ENCODE measurements at regions of chr6 and their contacts with region 1.

Region 1: GRCh38 chr6:119110601-119111548 is 32.4 kb upstream of the FAM184A start:
- DNase-seq: peak in 7 of 9 experiments; percentile 13 to 77 (median 48)
- ATAC-seq: peak; percentile 83
- H3K4me3 ChIP-seq: no peak overlapping the region
- H3K4me3 Mint-ChIP-seq: no peak overlapping the region
- H3K27ac ChIP-seq: no peak overlapping the region
- H3K27ac Mint-ChIP-seq: no peak overlapping the region
- H3K4me1 ChIP-seq: no peaks in the 10 kb centered on the region
- H3K4me1 Mint-ChIP-seq: peaks cover 11% of the 10 kb centered on the region
- H3K27me3 ChIP-seq: no peaks in the 10 kb centered on the region
- H3K27me3 Mint-ChIP-seq: no peaks in the 10 kb centered on the region
- CTCF ChIP-seq: peak; percentile 74

Region 2: GRCh38 chr6:117346142-117346930 is 1764.5 kb before region 1 on chr6:
- CTCF ChIA-PET with region 1: no interaction called
- POLR2A ChIA-PET with region 1: no interaction called
- intact Hi-C with region 1: loop called in 1 of 2 experiments (anchors 5 kb)
- DNase-seq: peak in 2 of 9 experiments; percentile 14 to 36
- ATAC-seq: no peak
- H3K4me3 ChIP-seq: no peak overlapping the region
- H3K4me3 Mint-ChIP-seq: no peak overlapping the region
- H3K27ac ChIP-seq: no peak overlapping the region
- H3K27ac Mint-ChIP-seq: no peak overlapping the region
- H3K4me1 ChIP-seq: no peaks in the 10 kb centered on the region
- H3K4me1 Mint-ChIP-seq: no peaks in the 10 kb centered on the region
- H3K27me3 ChIP-seq: no peaks in the 10 kb centered on the region
- H3K27me3 Mint-ChIP-seq: peaks cover 11% of the 10 kb centered on the region
- CTCF ChIP-seq: peak; percentile 72

Region 3: GRCh38 chr6:118565311-118565960 is 545.4 kb before region 1 on chr6:
- CTCF ChIA-PET with region 1: interaction called, 15 read pairs
- POLR2A ChIA-PET with region 1: no interaction called
- intact Hi-C with region 1: loop called (anchors 1 to 2 kb)
- DNase-seq: peak in 3 of 9 experiments; percentile 13 to 78 (median 66)
- ATAC-seq: peak; percentile 97
- H3K4me3 ChIP-seq: no peak overlapping the region
- H3K4me3 Mint-ChIP-seq: no peak overlapping the region
- H3K27ac ChIP-seq: no peak overlapping the region
- H3K27ac Mint-ChIP-seq: peak overlapping the region; percentile 85
- H3K4me1 ChIP-seq: peaks cover 3% of the 10 kb centered on the region
- H3K4me1 Mint-ChIP-seq: peaks cover 48% of the 10 kb centered on the region
- H3K27me3 ChIP-seq: no peaks in the 10 kb centered on the region
- H3K27me3 Mint-ChIP-seq: no peaks in the 10 kb centered on the region
- CTCF ChIP-seq: peak; percentile 72

Region 4: DNA sequence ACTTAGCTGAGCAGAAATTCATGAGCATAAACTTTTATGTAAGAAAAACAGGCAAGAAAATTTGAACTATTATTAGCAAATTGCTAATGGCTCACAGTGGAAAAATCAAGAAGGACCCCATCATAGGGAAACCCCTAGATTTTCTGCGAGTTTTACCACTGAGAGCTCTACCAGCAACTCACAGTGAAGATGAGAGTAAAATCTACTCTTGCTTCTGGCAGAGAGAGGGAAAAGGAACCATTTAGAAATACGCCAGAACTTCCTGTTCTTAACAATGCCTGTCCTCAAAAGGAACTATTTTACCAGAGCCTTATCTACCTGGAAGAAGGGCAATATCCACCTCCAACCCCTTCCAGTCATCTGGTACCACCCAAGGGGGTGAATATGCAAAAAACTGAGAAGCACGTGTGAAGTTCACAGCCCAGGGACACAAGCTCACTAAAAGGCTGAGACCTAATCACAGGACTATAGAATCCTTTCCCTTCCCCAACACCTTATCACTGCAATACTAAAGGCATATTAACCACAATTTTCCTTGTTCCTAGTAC is 251.3 kb before region 1 on chr6:
- CTCF ChIA-PET with region 1: no interaction called
- POLR2A ChIA-PET with region 1: no interaction called
- intact Hi-C with region 1: no loop called
- DNase-seq: no peak
- ATAC-seq: no peak
- H3K4me3 ChIP-seq: no peak overlapping the region
- H3K4me3 Mint-ChIP-seq: no peak overlapping the region
- H3K27ac ChIP-seq: no peak overlapping the region
- H3K27ac Mint-ChIP-seq: no peak overlapping the region
- H3K4me1 ChIP-seq: peaks cover 7% of the 10 kb centered on the region
- H3K4me1 Mint-ChIP-seq: peaks cover 52% of the 10 kb centered on the region
- H3K27me3 ChIP-seq: no peaks in the 10 kb centered on the region
- H3K27me3 Mint-ChIP-seq: no peaks in the 10 kb centered on the region
- CTCF ChIP-seq: no peak

Region 5: DNA sequence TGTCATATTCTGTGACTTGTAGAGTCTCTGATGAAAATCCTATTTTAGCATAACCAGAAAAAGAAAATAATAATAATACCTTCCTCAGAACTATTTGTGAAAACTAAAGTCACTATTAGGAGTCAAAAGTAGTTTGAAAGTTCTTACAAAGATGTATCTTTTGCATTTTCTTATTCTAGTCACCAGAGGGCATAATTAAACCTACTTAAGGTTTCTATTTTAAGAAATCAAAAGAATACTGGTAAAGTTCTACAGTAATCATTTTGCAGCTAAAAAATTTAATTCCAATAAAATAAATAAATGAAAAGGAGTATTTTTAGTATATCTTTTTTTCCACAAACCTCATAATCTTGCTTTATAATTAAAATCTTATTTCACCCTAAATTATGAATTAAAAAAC is 147.9 kb before region 1 on chr6:
- CTCF ChIA-PET with region 1: interaction called, 128 read pairs
- POLR2A ChIA-PET with region 1: interaction called, 4 read pairs
- intact Hi-C with region 1: loop called (anchors 1 kb)
- DNase-seq: peak in 1 of 9 experiments; percentile 22
- ATAC-seq: no peak
- H3K4me3 ChIP-seq: no peak overlapping the region
- H3K4me3 Mint-ChIP-seq: no peak overlapping the region
- H3K27ac ChIP-seq: no peak overlapping the region
- H3K27ac Mint-ChIP-seq: no peak overlapping the region
- H3K4me1 ChIP-seq: no peaks in the 10 kb centered on the region
- H3K4me1 Mint-ChIP-seq: peaks cover 6% of the 10 kb centered on the region
- H3K27me3 ChIP-seq: no peaks in the 10 kb centered on the region
- H3K27me3 Mint-ChIP-seq: no peaks in the 10 kb centered on the region
- CTCF ChIP-seq: peak; percentile 49

Region 6: DNA sequence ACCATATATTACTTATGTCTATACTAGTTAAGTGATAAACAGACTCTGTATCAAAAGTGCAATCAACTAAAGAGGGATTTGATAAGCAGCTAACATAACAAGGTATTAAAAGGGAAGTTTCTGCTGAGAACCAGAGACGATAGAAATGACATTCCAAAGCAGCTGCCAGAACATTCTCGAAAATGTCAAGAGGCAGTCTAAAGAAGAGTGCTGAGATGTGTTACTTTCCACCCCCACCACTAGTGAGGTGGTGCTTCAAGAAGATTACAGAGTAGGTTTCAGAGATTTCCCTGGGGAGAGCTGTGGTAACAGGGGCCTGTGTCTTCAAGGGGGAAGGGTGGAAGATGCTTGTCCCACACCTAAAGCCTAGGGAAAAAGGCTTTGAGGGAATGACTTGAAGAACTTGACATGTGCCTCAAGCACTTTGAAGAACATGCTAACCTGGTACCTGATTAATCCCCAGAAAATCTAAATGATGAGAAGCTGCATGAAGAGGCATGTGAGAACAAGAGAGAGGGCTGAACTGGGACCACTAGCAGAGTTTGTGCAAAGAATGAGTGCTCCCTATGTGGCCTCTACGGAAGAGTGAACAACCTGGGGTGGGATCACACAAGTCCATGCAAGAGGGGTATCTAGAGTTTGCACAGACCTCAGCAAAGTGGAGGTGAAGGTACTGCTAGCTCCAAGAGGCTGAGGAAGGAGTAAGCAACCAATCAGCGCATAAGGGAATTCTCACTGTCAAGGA is 37.4 kb before region 1 on chr6:
- CTCF ChIA-PET with region 1: interaction called, 14 read pairs
- POLR2A ChIA-PET with region 1: no interaction called
- intact Hi-C with region 1: loop called in 1 of 2 experiments (anchors 1 kb)
- DNase-seq: no peak
- ATAC-seq: no peak
- H3K4me3 ChIP-seq: no peak overlapping the region
- H3K4me3 Mint-ChIP-seq: no peak overlapping the region
- H3K27ac ChIP-seq: no peak overlapping the region
- H3K27ac Mint-ChIP-seq: peak overlapping the region; percentile 1
- H3K4me1 ChIP-seq: peaks cover 21% of the 10 kb centered on the region
- H3K4me1 Mint-ChIP-seq: peaks cover 32% of the 10 kb centered on the region
- H3K27me3 ChIP-seq: no peaks in the 10 kb centered on the region
- H3K27me3 Mint-ChIP-seq: no peaks in the 10 kb centered on the region
- CTCF ChIP-seq: no peak

Region 7: GRCh38 chr6:119096721-119097565 is 13.9 kb before region 1 on chr6:
- CTCF ChIA-PET with region 1: interaction called, 31 read pairs
- POLR2A ChIA-PET with region 1: no interaction called
- intact Hi-C with region 1: no loop called
- DNase-seq: no peak
- ATAC-seq: no peak
- H3K4me3 ChIP-seq: no peak overlapping the region
- H3K4me3 Mint-ChIP-seq: peak overlapping the region; percentile 4
- H3K27ac ChIP-seq: no peak overlapping the region
- H3K27ac Mint-ChIP-seq: peak overlapping the region; percentile 73
- H3K4me1 ChIP-seq: peaks cover 6% of the 10 kb centered on the region
- H3K4me1 Mint-ChIP-seq: peaks cover 12% of the 10 kb centered on the region
- H3K27me3 ChIP-seq: no peaks in the 10 kb centered on the region
- H3K27me3 Mint-ChIP-seq: no peaks in the 10 kb centered on the region
- CTCF ChIP-seq: no peak

Measured in CD8-positive, alpha-beta T cell (primary cell).